ENCODE measurements at regions of chr17 and their contacts with region 1.

Region 1: GRCh38 chr17:12421646-12422306 is 243.9 kb upstream of the MYOCD start:
- DNase-seq: no peak
- ATAC-seq: no peak
- H3K4me3 ChIP-seq: no peak overlapping the region
- H3K27ac ChIP-seq: peak overlapping the region in 1 of 12 donors; percentile 76
- H3K4me1 ChIP-seq: no peaks in the 10 kb centered on the region
- H3K27me3 ChIP-seq: no peaks in the 10 kb centered on the region
- CTCF ChIP-seq: no peak
- POLR2A ChIP-seq: no peak

Region 2: GRCh38 chr17:12365805-12366204 is 56.0 kb before region 1 on chr17:
- intact Hi-C with region 1: loop called in 1 of 10 experiments (anchors 10 kb)
- DNase-seq: peak in 3 of 5 donors; percentile 29 to 65 (median 31)
- ATAC-seq: peak; percentile 51 to 98 (median 83)
- H3K4me3 ChIP-seq: no peak overlapping the region
- H3K27ac ChIP-seq: peak overlapping the region in 5 of 12 donors; percentile 30 to 84 (median 33)
- H3K4me1 ChIP-seq: peaks cover 0 to 13% (median 0%) of the 10 kb centered on the region in 12 donors
- H3K27me3 ChIP-seq: no peaks in the 10 kb centered on the region
- CTCF ChIP-seq: no peak
- POLR2A ChIP-seq: no peak

Region 3: GRCh38 chr17:12620200-12620720 is 198.5 kb after region 1 on chr17:
- intact Hi-C with region 1: no loop called
- DNase-seq: no peak
- ATAC-seq: no peak
- H3K4me3 ChIP-seq: no peak overlapping the region
- H3K27ac ChIP-seq: no peak overlapping the region
- H3K4me1 ChIP-seq: peaks cover 0 to 12% (median 0%) of the 10 kb centered on the region in 12 donors
- H3K27me3 ChIP-seq: no peaks in the 10 kb centered on the region
- CTCF ChIP-seq: no peak
- POLR2A ChIP-seq: no peak

Region 4: GRCh38 chr17:13010959-13011358 is 589.2 kb after region 1 on chr17:
- intact Hi-C with region 1: no loop called
- DNase-seq: no peak
- ATAC-seq: peak in 1 of 4 donors; percentile 64
- H3K4me3 ChIP-seq: no peak overlapping the region
- H3K27ac ChIP-seq: no peak overlapping the region
- H3K4me1 ChIP-seq: peaks cover 0 to 4% (median 0%) of the 10 kb centered on the region in 12 donors
- H3K27me3 ChIP-seq: no peaks in the 10 kb centered on the region
- CTCF ChIP-seq: no peak
- POLR2A ChIP-seq: no peak